ENCODE measurements at regions of chr11 and their contacts with region 1.

Region 1: DNA sequence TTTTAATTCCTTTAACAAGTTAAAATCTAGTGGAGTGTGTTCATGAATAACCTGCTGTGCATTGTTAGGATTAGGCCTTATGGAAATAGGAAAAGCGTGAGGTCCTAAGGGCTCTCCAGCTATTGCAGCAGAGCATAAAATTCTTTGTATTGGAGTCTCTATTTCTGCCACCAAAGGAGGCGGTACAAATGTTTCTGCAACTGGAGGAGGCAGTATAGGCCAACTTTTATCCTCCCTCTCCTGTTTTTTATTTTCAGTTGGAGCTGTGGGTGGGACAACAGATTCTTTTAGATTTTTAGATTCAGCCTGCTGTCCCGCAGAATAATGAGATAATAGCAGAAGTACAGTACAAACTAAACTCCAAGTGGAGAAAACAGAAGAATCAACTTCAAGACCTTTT is 26.2 kb downstream of the OR10A6 start:
- DNase-seq: no peak
- ATAC-seq: no peak
- H3K4me3 Mint-ChIP-seq: 0 out of 2 replicates have a peak overlapping the region, but pooled peaks have one; percentile 3
- H3K27ac Mint-ChIP-seq: no peak overlapping the region
- H3K4me1 Mint-ChIP-seq: peaks cover 69% of the 10 kb centered on the region
- H3K27me3 Mint-ChIP-seq: no peaks in the 10 kb centered on the region
- CTCF ChIP-seq: no peak

Region 2: GRCh38 chr11:7892840-7893254 is 12.1 kb before region 1 on chr11:
- CTCF ChIA-PET with region 1: interaction called, 17 read pairs
- POLR2A ChIA-PET with region 1: interaction called, 5 read pairs
- DNase-seq: no peak
- ATAC-seq: peak; percentile 83
- H3K4me3 Mint-ChIP-seq: no peak overlapping the region
- H3K27ac Mint-ChIP-seq: no peak overlapping the region
- H3K4me1 Mint-ChIP-seq: peaks cover 6% of the 10 kb centered on the region
- H3K27me3 Mint-ChIP-seq: peaks cover 14% of the 10 kb centered on the region
- CTCF ChIP-seq: peak; percentile 52

Region 3: GRCh38 chr11:7977232-7977917 is 72.5 kb after region 1 on chr11:
- CTCF ChIA-PET with region 1: interaction called, 10 read pairs
- POLR2A ChIA-PET with region 1: interaction called, 6 read pairs
- DNase-seq: no peak
- ATAC-seq: no peak
- H3K4me3 Mint-ChIP-seq: no peak overlapping the region
- H3K27ac Mint-ChIP-seq: peak overlapping the region; percentile 89
- H3K4me1 Mint-ChIP-seq: peaks cover 20% of the 10 kb centered on the region
- H3K27me3 Mint-ChIP-seq: no peaks in the 10 kb centered on the region
- CTCF ChIP-seq: no peak

Region 4: DNA sequence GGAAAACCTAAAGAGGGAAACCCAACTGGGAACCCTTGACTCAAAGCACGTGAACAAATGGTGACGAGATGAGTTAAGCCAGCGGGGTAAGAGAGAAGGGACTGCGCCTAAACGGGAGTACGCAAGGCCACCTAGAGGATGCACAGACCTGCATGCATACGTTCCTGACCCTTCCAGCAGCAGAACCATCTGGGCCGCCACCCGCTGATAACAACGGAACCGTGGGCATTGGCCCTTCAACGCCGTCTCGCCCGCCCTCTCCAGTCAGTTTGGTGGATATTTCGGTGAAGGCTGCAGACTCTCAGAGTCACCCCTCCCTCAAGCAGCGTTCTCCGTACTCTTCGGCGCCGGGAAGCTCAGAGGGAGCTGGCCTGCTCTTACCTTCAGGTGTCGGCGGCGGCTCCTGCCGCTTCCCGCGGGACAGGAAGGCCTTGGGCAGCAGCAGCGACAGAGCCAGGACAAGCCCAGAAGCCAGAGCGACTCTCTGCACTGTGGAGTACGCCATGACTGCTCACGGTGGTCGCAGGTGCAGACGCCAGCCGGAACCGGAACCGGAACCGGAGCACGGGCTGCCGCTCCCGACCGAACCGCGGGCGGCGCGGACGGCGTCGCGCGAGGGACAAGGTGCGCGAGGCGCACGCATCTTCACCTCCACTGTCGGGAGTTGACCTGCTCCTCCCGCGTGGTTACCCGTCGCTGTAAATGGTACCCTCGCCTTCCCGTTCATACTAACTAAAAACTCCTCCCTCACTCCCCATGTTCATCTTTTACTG is 263.8 kb after region 1 on chr11 and contains the start of gene RIC3:
- CTCF ChIA-PET with region 1: no interaction called
- POLR2A ChIA-PET with region 1: no interaction called
- DNase-seq: peak; percentile 61
- ATAC-seq: peak; percentile 82
- H3K4me3 Mint-ChIP-seq: peak within 1 kb of the TSS; percentile 78
- H3K27ac Mint-ChIP-seq: peak within 1 kb of the TSS; percentile 53
- H3K4me1 Mint-ChIP-seq: peaks cover 22% of the 10 kb centered on the region; the same call in 1 of the 2 replicates
- H3K27me3 Mint-ChIP-seq: peaks cover 37% of the 10 kb centered on the region
- CTCF ChIP-seq: no peak
- total RNA-seq, gene RIC3: 15.0 to 17.6 TPM (median 15.7 TPM) in 3 replicates